ENCODE measurements at regions of chr1 and their contacts with region 1.

Region 1: GRCh38 chr1:19179597-19180264 is 30.3 kb downstream of the UBR4 start:
- H3K4me3 Mint-ChIP-seq: no peak overlapping the region
- H3K27ac Mint-ChIP-seq: no peak overlapping the region
- H3K4me1 Mint-ChIP-seq: no peaks in the 10 kb centered on the region
- H3K27me3 Mint-ChIP-seq: no peaks in the 10 kb centered on the region

Region 2: DNA sequence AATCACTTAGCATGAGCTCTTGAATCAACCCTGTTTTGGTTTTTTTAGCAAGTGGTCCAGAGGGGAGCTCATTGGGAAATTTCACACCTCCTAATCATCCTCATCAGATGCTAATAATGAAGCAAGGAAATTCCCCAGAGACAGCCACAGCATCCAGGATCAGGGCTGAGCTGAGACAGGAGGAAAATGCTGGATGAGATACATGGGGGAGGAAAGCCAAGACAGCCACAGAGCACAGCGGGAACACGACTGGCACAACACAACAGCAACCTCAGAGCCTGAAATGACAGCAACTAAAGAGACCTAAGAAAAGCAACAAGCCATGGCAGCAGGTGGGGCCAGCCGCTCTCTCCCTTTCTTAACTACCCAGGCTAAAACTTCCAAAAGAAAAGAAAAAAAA is 40.0 kb before region 1 on chr1:
- intact Hi-C with region 1: loop called (anchors 10 kb)
- H3K4me3 Mint-ChIP-seq: no peak overlapping the region
- H3K27ac Mint-ChIP-seq: no peak overlapping the region
- H3K4me1 Mint-ChIP-seq: no peaks in the 10 kb centered on the region
- H3K27me3 Mint-ChIP-seq: no peaks in the 10 kb centered on the region